AG04450 (cell line): ENCODE measurements at regions of chr17 and their contacts with region 1.

Region 1: GRCh38 chr17:73429440-73430164 is 117.8 kb upstream of the CDC42EP4 start:
- DNase-seq: peak; percentile 34
- H3K4me3 ChIP-seq: no peak overlapping the region
- H3K27ac ChIP-seq: no peak overlapping the region
- H3K27me3 ChIP-seq: peaks cover 3% of the 10 kb centered on the region
- CTCF ChIP-seq: peak; percentile 97

Region 2: DNA sequence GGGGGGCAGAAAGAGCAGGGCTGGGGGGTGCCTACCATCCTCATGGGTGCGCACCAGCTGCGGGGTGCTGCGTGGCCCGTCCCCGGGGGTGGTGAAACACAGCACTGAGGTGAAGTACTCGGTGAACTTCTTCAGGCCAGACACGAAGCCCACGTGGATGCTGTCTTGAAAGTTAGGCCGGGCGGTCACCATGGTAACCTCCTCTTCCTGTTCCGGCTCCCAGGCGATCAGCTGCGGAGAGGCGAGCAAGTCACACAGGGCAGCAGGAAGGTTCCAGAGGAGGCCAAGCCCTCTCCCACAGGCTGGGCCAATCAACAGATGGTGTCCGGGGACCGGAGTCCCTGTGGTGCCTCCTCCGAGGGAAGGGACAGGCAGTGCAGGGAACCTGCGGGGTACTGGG is 27.7 kb before region 1 on chr17:
- CTCF ChIA-PET with region 1: interaction called, 13 read pairs
- POLR2A ChIA-PET with region 1: no interaction called
- DNase-seq: no peak
- H3K4me3 ChIP-seq: no peak overlapping the region
- H3K27ac ChIP-seq: no peak overlapping the region
- H3K27me3 ChIP-seq: peaks cover 6% of the 10 kb centered on the region
- CTCF ChIP-seq: no peak

Region 3: GRCh38 chr17:73710095-73710592 is 280.5 kb after region 1 on chr17:
- CTCF ChIA-PET with region 1: interaction called, 16 read pairs
- POLR2A ChIA-PET with region 1: no interaction called
- DNase-seq: peak; percentile 2
- H3K4me3 ChIP-seq: no peak overlapping the region
- H3K27ac ChIP-seq: no peak overlapping the region
- H3K27me3 ChIP-seq: no peaks in the 10 kb centered on the region
- CTCF ChIP-seq: peak; percentile 59

Region 4: DNA sequence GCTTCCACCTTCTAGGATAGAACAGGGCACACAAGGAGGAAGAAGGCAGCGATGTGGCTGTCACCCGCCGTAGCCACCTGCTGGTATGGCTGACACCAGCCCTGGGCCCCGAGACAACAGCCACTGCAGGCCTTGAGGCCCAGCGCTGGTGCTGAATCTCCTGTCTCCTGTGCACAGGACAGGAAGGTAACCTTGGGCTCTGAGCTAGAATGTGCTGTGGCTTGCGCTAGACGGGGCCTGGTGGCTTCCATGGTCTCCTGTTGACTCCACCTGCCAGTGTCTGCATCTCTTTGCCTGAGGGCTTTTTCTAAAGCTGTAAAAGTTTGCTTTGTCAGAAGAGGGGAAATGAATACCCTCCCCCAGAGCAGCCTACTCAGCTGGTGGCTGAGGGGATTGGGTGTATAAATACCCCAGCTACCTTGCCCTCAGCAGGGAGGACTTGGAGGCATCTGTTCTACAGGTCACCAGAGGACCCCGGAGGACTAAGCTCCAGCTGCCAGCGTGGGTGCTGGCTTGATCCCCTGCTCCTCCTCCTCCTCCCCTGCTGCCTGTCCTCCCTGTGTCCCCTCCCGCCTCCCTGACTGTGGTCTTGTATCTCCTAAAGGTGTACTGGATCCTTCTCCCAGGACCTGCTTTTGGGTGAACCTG is 290.7 kb after region 1 on chr17:
- CTCF ChIA-PET with region 1: no interaction called
- POLR2A ChIA-PET with region 1: no interaction called
- DNase-seq: no peak
- H3K4me3 ChIP-seq: no peak overlapping the region
- H3K27ac ChIP-seq: no peak overlapping the region
- H3K27me3 ChIP-seq: no peaks in the 10 kb centered on the region
- CTCF ChIP-seq: no peak

Region 5: GRCh38 chr17:74176546-74177001 is 747.0 kb after region 1 on chr17:
- CTCF ChIA-PET with region 1: interaction called, 48 read pairs
- POLR2A ChIA-PET with region 1: no interaction called
- DNase-seq: no peak
- H3K4me3 ChIP-seq: no peak overlapping the region
- H3K27ac ChIP-seq: no peak overlapping the region
- H3K27me3 ChIP-seq: peaks cover 11% of the 10 kb centered on the region
- CTCF ChIP-seq: peak; percentile 88

Region 6: DNA sequence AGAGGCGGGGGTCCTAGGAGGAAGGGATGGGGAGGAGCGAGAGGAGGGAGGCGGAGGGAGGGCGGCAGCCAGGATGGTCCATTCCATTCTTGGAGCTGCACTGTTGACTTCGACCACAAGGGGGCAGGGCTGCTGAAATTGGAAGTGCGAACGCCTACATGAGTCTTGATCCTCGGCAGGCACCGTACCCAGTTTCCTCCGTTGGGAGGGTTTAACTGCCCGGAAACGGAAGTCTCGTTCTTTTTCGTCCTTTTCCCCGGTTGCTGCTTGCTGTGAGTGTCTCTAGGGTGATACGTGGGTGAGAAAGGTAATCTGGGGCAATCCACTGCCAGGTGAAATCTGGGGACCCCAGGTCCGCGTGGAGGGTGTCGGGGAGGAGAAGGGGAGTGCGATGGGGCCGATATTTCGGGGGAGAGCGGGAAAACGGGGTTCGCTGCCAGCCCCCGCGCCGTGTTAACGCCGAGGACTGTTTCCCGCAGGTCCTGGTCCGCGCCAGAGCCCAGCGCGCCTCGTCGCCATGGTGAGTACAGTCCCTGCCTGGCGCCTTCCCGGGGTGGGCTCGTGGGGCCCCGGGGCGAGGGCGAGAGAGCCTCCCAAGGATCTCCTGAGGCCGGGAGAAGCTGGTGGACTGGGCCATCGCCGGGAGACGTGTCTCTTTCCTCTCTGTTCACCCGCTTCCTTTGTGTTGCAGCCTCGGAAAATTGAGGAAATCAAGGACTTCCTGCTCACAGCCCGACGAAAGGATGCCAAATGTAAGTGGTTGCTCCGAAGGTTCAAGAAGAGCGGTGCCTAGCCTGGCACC is 774.0 kb after region 1 on chr17 and contains the start of gene RPL38:
- CTCF ChIA-PET with region 1: interaction called, 45 read pairs
- POLR2A ChIA-PET with region 1: no interaction called
- DNase-seq: peak; percentile 94
- H3K4me3 ChIP-seq: peak within 1 kb of the TSS; percentile 96
- H3K27ac ChIP-seq: peak within 1 kb of the TSS; percentile 88
- H3K27me3 ChIP-seq: peaks cover 13% of the 10 kb centered on the region
- CTCF ChIP-seq: peak; percentile 97
- polyA plus RNA-seq, gene RPL38: 2,243 and 2,383 TPM in 2 replicates